Activated B cell treated with CpG ODN at 0.5 μM for 24 hours (primary cell): ENCODE measurements at regions of chr10 and their contacts with region 1.

Region 1: GRCh38 chr10:72567884-72568640 is 57.8 kb downstream of the MICU1 start:
- DNase-seq: no peak
- ATAC-seq: no peak
- H3K4me3 Mint-ChIP-seq: no peak overlapping the region
- H3K27ac Mint-ChIP-seq: no peak overlapping the region
- H3K4me1 Mint-ChIP-seq: peaks cover 11% of the 10 kb centered on the region
- H3K27me3 Mint-ChIP-seq: no peaks in the 10 kb centered on the region
- CTCF ChIP-seq: no peak

Region 2: GRCh38 chr10:72625608-72626443 is 57.8 kb after region 1 on chr10 and contains the start of gene MICU1:
- CTCF ChIA-PET with region 1: interaction called, 3 read pairs
- POLR2A ChIA-PET with region 1: no interaction called
- intact Hi-C with region 1: loop called (anchors 1 kb)
- DNase-seq: peak; percentile 83
- ATAC-seq: peak; percentile 98
- H3K4me3 Mint-ChIP-seq: peak within 1 kb of the TSS; percentile 100
- H3K27ac Mint-ChIP-seq: peak within 1 kb of the TSS; percentile 97
- H3K4me1 Mint-ChIP-seq: peaks cover 12% of the 10 kb centered on the region
- H3K27me3 Mint-ChIP-seq: no peaks in the 10 kb centered on the region
- CTCF ChIP-seq: no peak
- total RNA-seq, gene MICU1: 27.4 and 34.5 TPM in 2 replicates

Region 3: DNA sequence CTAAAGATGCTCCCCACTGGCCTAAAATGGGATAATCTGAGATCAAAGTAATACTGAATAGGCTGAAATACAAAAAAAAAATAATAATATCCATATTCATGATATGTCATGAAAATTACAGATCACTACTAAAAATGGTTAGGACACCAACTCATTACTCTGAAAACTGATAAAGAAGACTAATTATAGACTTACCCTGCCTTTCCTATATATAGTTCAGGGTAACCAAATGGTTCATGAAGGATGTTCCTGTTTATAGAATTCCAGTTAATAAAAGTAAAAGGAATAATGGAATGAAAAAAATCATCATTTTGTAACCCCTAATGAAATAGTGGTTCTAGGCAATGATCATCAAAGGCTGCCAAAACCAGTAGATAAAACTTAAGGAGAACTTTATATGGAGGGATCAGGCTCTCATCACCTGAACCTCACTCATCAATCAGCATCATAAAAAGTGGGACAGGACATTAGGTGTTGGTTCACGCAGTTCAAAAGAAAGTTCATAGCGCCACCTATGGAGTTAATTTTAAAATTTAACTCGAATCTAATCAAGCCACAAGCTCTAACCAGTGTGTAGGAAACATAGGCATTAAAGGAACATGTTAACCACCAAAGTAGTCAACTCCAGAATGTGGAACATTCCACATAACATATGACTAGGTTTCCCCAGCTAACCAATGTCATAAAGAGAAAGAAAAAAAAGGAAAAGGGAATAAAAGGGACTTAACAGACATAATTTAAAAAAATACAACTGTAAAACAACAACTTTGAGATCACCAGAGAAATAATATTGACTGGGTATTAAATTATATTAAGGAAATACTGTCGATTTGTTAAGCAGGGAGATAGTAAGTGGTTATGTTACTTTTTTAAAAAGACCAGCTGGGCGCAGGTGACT is 492.9 kb after region 1 on chr10:
- CTCF ChIA-PET with region 1: no interaction called
- POLR2A ChIA-PET with region 1: no interaction called
- intact Hi-C with region 1: no loop called
- DNase-seq: no peak
- ATAC-seq: no peak
- H3K4me3 Mint-ChIP-seq: no peak overlapping the region
- H3K27ac Mint-ChIP-seq: no peak overlapping the region
- H3K4me1 Mint-ChIP-seq: peaks cover 1% of the 10 kb centered on the region
- H3K27me3 Mint-ChIP-seq: no peaks in the 10 kb centered on the region
- CTCF ChIP-seq: no peak